ENCODE measurements at regions of chrX and their contacts with region 1.

Region 1: GRCh38 chrX:120144178-120144844 is 14.1 kb upstream of the RHOXF2 start:
- DNase-seq: no peak
- ATAC-seq: no peak
- H3K4me3 ChIP-seq: no peak overlapping the region
- H3K27ac ChIP-seq: no peak overlapping the region
- H3K4me1 ChIP-seq: no peaks in the 10 kb centered on the region
- H3K27me3 ChIP-seq: peaks cover 0 to 7% (median 0%) of the 10 kb centered on the region in 3 donors
- CTCF ChIP-seq: no peak

Region 2: DNA sequence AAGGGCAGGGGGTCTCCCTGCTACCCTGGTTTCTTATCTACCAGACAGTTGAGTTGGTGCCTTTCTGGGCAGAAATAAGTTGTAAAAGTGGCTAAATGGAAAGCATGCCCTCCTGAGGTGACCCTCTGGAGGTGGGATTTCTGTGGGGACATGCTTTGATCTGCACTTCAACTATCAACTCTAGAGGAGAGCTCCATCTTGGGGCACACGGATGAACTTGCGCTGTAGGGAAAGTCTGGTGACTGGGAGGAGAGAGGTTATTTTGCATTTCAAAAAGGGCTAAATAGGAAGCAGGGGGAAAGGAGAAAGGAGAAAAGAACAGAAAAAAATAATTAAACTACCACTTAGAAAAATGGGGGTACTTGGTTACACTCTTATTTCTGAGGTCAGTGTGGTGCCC is 54.1 kb before region 1 on chrX:
- intact Hi-C with region 1: loop called in 1 of 2 experiments (anchors 10 kb)
- DNase-seq: no peak
- ATAC-seq: no peak
- H3K4me3 ChIP-seq: no peak overlapping the region
- H3K27ac ChIP-seq: no peak overlapping the region
- H3K4me1 ChIP-seq: no peaks in the 10 kb centered on the region
- H3K27me3 ChIP-seq: no peaks in the 10 kb centered on the region
- CTCF ChIP-seq: no peak

Region 3: DNA sequence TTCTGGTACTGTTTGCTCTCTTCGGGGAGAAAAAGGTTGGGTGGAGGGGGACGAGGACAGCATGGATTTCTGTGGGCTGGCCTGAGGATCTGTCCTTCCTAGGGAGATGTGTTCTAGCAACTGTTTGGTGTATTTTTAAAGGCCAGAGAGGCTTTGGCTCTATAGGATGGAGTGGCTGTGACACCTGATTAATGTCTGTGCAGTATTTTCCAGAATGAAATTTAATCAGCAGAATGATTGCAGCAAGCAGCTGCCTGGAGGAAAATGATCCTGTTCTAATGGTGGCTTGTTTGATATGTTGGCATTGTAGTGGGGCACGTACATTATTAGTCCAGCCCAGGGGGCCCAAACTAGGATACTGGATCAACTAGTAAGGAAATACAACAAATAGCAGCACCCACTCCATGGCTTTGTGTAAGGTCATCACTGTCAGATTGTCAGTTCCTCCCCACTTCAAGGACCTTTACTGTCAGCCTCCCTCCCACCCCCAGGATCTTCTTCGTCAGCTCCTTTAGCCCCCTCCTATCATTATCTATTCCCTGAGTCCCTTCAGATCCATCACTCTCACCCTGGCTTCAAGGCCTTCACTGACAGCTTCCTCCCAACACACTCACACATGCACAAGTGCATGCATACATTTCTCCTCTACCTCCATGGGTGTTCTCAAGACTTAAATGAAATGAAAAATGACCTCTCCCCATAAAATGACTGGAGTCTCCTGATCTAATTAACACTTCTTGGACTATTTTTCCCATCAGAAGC is 177.4 kb after region 1 on chrX:
- intact Hi-C with region 1: no loop called
- DNase-seq: no peak
- ATAC-seq: peak in 1 of 4 donors; percentile 52
- H3K4me3 ChIP-seq: no peak overlapping the region
- H3K27ac ChIP-seq: no peak overlapping the region
- H3K4me1 ChIP-seq: no peaks in the 10 kb centered on the region
- H3K27me3 ChIP-seq: no peaks in the 10 kb centered on the region
- CTCF ChIP-seq: no peak

Measured in psoas muscle (tissue), 8 donors.